ENCODE measurements at regions of chr22 and their contacts with region 1.

Region 1: GRCh38 chr22:24503137-24503842 is 8.2 kb downstream of the UPB1 start:
- DNase-seq: peak; percentile 77
- ATAC-seq: peak; percentile 71

Region 2: DNA sequence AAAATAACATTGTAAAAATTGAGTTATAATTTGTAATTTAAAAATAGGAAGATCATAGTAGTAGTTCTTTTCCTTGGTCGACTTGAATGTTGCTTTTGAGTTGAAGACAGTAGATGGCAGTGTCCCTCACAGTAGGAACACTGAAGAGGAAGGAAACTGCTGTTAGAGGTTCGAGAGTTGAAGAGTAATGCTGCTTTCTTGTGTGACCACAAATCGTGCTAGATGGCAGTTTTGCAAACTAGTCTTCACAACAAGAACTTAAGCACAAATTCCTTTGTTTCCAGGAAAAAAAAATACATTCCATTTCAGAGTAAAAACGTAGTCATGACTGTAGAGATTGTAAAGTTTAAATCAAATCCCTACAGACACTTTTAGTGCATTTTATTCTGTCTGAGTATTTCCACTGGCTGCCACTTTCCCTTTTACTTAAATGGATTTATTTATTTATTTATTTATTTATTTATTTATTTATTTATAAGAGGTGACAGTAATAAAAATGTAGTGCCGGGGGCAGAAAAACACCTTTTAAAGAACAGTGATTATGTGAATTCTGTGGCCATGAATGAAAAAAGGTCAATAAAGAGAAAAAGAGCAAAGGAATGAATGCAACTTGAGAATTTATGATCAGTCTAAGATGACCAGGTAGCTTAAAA is 178.1 kb before region 1 on chr22:
- intact Hi-C with region 1: loop called (anchors 10 kb)
- DNase-seq: no peak
- ATAC-seq: peak; percentile 79

Region 3: GRCh38 chr22:24423519-24424000 is 79.7 kb before region 1 on chr22:
- intact Hi-C with region 1: loop called (anchors 10 kb)
- DNase-seq: peak; percentile 83
- ATAC-seq: peak; percentile 81